ENCODE measurements at regions of chr7 and their contacts with region 1.

Region 1: DNA sequence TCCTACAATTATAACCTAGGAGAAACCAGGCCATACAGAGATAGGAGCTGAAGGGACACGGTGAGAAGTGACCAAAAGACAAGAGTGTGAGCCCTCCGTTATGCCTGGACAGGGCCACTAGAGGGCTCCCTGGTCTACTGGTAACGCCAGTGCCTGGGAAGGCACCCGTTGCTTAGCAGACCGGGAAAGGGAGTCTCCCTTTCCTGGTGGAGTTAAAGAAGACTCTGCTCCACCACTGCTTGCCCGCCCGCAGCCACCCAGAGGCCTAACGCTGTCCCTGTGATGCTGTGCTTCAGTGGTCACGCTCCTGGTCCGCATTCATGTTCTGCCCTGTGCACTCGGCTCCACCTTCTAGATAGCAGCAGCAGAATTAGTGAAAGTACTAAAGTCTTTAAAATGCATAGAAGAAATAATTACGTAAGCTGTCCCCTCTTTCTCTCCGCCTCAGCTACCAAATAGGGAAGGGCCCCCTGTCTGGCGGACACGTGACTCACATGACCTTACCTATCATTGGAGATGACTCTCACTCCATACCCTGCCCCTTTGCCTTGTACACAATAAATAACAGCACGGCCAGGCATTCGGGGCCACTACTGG is 34.8 kb downstream of the GRID2IP start:
- DNase-seq: peak; percentile 92
- H3K4me3 ChIP-seq: peak overlapping the region in 3 of 4 donors; percentile 21 to 24 (median 22)
- H3K27ac ChIP-seq: peak overlapping the region; percentile 13 to 53 (median 39)
- H3K4me1 ChIP-seq: peaks cover 0 to 6% (median 0%) of the 10 kb centered on the region in 4 donors
- H3K27me3 ChIP-seq: peaks cover 0 to 4% (median 0%) of the 10 kb centered on the region in 3 donors
- CTCF ChIP-seq: peak; percentile 69 to 76 (median 72)
- EP300 ChIP-seq: no peak
- POLR2A ChIP-seq: no peak

Region 2: DNA sequence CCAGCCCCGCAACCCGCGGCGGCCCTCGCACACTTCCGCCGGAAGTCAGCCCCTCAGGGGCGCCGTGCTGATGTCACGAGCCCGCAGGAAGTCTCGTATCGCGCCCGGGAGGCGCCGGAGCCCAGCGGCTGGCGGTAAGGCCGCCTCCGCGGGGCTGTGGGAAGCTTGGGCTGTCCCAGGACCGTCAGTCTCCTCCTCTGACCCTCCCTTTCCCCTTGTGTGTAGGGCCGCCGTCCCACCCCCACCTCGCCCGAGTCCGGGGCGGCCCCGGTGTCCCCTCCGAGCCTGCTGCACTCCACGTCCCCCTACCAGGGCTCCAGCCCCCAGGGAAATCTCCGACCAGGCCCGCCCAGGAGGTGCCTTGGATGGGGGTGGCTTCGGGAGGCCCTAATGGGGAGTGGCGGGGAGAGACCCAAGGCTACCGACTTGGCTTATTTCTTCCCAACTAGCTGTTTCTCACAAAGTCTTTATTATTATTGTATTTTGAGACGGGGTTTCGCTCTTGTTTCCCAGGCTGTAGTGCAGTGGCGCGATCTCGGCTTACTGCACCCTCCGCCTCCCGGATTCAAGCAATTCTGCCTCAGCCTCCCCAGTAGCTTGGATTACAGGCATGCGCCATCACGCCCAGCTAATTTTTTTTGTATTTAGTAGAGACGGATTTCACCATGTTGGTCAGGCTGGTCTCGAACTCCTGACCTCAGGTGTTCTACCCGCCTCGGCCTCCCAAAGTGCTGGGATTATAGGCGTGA is 61.1 kb after region 1 on chr7 and contains the start of gene ZDHHC4:
- intact Hi-C with region 1: loop called (anchors 2 kb)
- DNase-seq: peak; percentile 93
- H3K4me3 ChIP-seq: peak within 1 kb of the TSS; percentile 67 to 77 (median 72)
- H3K27ac ChIP-seq: peak within 1 kb of the TSS; percentile 93 to 97 (median 95)
- H3K4me1 ChIP-seq: peaks cover 0 to 11% (median 6%) of the 10 kb centered on the region in 4 donors
- H3K27me3 ChIP-seq: no peaks in the 10 kb centered on the region
- CTCF ChIP-seq: no peak
- EP300 ChIP-seq: peak in 1 of 4 donors; percentile 6
- POLR2A ChIP-seq: peak; percentile 93 to 94
- total RNA-seq, gene ZDHHC4: 51.0 to 73.6 (median 61.8) TPM